GM12878 (cell line): ENCODE measurements at regions of chr1 and their contacts with region 1.

Region 1: DNA sequence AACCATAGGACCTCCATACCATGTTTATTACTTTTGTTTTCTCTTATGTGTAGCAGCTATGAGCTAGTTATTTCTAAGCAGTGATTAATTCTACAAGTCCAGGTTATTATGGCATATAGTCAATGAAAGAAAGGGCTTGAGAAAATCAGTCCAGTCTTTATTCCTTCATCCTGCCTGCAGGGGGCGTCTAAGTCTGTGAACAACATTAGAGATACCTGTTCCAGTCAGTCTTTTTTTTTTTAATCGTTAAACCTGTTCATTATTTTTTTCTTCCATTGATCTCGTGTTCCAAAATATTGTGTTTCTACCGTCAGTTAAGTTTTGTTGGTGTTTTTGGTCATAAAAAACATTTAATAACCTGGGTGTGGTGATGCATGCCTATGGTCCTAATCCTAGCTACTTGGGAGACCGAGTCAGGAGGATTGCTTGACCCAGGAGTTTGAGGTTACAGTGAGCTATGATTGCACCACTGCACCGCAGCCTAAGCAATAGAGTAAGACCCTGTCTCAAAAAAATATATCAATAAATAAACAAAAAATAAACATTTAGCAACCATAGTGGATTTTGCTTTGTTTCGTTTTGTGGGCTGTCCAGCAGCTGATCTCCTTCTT is 29.4 kb upstream of the CD2 start:
- DNase-seq: no peak
- ATAC-seq: peak; percentile 88
- H3K4me3 ChIP-seq: no peak overlapping the region
- H3K27ac ChIP-seq: no peak overlapping the region
- H3K4me1 ChIP-seq: no peaks in the 10 kb centered on the region
- H3K27me3 ChIP-seq: no peaks in the 10 kb centered on the region
- CTCF ChIP-seq: peak; percentile 70 to 78 (median 72)
- EP300 ChIP-seq: no peak
- POLR2A ChIP-seq: no peak
- RAD21 ChIP-seq: peak; percentile 80

Region 2: GRCh38 chr1:116122955-116123757 is 601.7 kb before region 1 on chr1:
- CTCF ChIA-PET with region 1: no interaction called
- POLR2A ChIA-PET with region 1: no interaction called
- RAD21 ChIA-PET with region 1: no interaction called
- SMC1A ChIA-PET with region 1: no interaction called
- in situ Hi-C with region 1: no loop called
- intact Hi-C with region 1: no loop called
- DNase-seq: no peak
- ATAC-seq: no peak
- H3K4me3 ChIP-seq: no peak overlapping the region
- H3K27ac ChIP-seq: no peak overlapping the region
- H3K4me1 ChIP-seq: no peaks in the 10 kb centered on the region
- H3K27me3 ChIP-seq: no peaks in the 10 kb centered on the region
- CTCF ChIP-seq: no peak
- EP300 ChIP-seq: no peak
- POLR2A ChIP-seq: no peak
- RAD21 ChIP-seq: no peak

Region 3: GRCh38 chr1:116763787-116764465 is 39.1 kb after region 1 on chr1:
- CTCF ChIA-PET with region 1: interaction called, 7 read pairs
- POLR2A ChIA-PET with region 1: no interaction called
- RAD21 ChIA-PET with region 1: interaction called, 6 read pairs
- SMC1A ChIA-PET with region 1: interaction called, 10 read pairs
- in situ Hi-C with region 1: no loop called
- intact Hi-C with region 1: no loop called
- DNase-seq: no peak
- ATAC-seq: peak; percentile 22
- H3K4me3 ChIP-seq: no peak overlapping the region
- H3K27ac ChIP-seq: no peak overlapping the region
- H3K4me1 ChIP-seq: peaks cover 10% of the 10 kb centered on the region
- H3K27me3 ChIP-seq: no peaks in the 10 kb centered on the region; a peak in 1 of 4 replicates
- CTCF ChIP-seq: peak; percentile 25 to 41 (median 36); a peak in 5 of 6 replicates
- EP300 ChIP-seq: no peak
- POLR2A ChIP-seq: no peak
- RAD21 ChIP-seq: peak; percentile 44

Region 4: GRCh38 chr1:116785006-116785405 is 60.1 kb after region 1 on chr1:
- CTCF ChIA-PET with region 1: no interaction called
- POLR2A ChIA-PET with region 1: no interaction called
- RAD21 ChIA-PET with region 1: no interaction called
- SMC1A ChIA-PET with region 1: no interaction called
- in situ Hi-C with region 1: no loop called
- intact Hi-C with region 1: no loop called
- DNase-seq: no peak
- ATAC-seq: peak; percentile 70
- H3K4me3 ChIP-seq: no peak overlapping the region
- H3K27ac ChIP-seq: no peak overlapping the region
- H3K4me1 ChIP-seq: no peaks in the 10 kb centered on the region
- H3K27me3 ChIP-seq: no peaks in the 10 kb centered on the region
- CTCF ChIP-seq: no peak
- EP300 ChIP-seq: no peak
- POLR2A ChIP-seq: no peak
- RAD21 ChIP-seq: no peak

Region 5: GRCh38 chr1:116934586-116935207 is 209.8 kb after region 1 on chr1:
- CTCF ChIA-PET with region 1: interaction called, 12 read pairs
- POLR2A ChIA-PET with region 1: interaction called, 3 read pairs
- RAD21 ChIA-PET with region 1: interaction called, 4 read pairs
- SMC1A ChIA-PET with region 1: interaction called, 11 read pairs
- in situ Hi-C with region 1: no loop called
- intact Hi-C with region 1: no loop called
- DNase-seq: no peak
- ATAC-seq: peak; percentile 83
- H3K4me3 ChIP-seq: no peak overlapping the region
- H3K27ac ChIP-seq: no peak overlapping the region
- H3K4me1 ChIP-seq: no peaks in the 10 kb centered on the region
- H3K27me3 ChIP-seq: no peaks in the 10 kb centered on the region
- CTCF ChIP-seq: peak; percentile 37 to 54 (median 43); a peak in 5 of 6 replicates
- EP300 ChIP-seq: no peak
- POLR2A ChIP-seq: no peak
- RAD21 ChIP-seq: peak; percentile 39; the same call in 1 of the 2 replicates

Region 6: DNA sequence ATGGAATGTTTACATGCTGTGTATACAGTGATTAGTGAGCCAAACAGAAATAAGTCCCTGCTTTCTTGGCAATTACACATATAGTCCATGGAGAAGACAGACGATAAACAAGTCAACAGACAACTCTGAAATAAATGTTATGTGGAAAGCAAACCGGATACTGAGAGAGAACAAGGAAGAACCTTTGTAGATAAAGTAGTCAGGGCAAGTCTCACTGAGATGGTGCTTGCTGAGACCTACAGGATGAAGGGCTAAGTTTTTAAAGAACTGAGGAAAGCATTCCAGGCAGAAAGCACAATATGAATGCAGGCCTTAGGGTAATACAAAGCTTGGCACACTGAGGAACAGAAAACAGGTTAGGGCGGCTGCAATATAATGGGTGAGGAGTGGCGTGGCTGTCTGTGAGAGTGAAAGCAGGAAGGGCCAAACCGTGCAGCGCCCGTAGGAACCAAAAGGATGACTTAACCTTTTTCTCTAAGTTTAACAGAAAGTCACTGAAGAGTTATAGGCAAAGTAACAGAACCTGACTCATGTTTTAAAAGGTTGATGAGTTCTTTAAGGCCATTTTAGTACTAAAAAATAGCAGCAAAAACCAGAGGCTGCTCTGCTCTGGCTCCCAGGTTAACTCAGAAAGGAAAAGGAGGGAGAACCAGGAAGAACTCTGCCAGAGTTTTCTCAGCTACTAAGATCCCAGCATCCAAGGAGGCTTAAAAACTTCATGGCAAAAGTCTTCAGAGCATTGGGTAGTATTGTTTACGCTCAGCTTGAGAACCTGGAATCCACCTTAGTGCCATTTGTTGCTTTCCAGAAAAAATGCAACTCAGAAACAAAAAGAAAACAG is 326.6 kb after region 1 on chr1:
- CTCF ChIA-PET with region 1: interaction called, 134 read pairs
- POLR2A ChIA-PET with region 1: no interaction called
- RAD21 ChIA-PET with region 1: interaction called, 39 read pairs
- SMC1A ChIA-PET with region 1: interaction called, 73 read pairs
- in situ Hi-C with region 1: no loop called
- intact Hi-C with region 1: loop called (anchors 2 kb)
- DNase-seq: peak; percentile 34
- ATAC-seq: peak; percentile 93
- H3K4me3 ChIP-seq: peak overlapping the region; percentile 61; the same call in 1 of the 2 replicates
- H3K27ac ChIP-seq: peak overlapping the region; percentile 89
- H3K4me1 ChIP-seq: peaks cover 13% of the 10 kb centered on the region
- H3K27me3 ChIP-seq: no peaks in the 10 kb centered on the region
- CTCF ChIP-seq: no peak
- EP300 ChIP-seq: no peak; a peak in 1 of 4 replicates
- POLR2A ChIP-seq: peak; percentile 55
- RAD21 ChIP-seq: peak; percentile 2; the same call in 1 of the 2 replicates

Region 7: GRCh38 chr1:117128323-117129079 is 403.6 kb after region 1 on chr1:
- CTCF ChIA-PET with region 1: interaction called, 32 read pairs
- POLR2A ChIA-PET with region 1: no interaction called
- RAD21 ChIA-PET with region 1: interaction called, 4 read pairs
- SMC1A ChIA-PET with region 1: interaction called, 5 read pairs
- in situ Hi-C with region 1: no loop called
- intact Hi-C with region 1: no loop called
- DNase-seq: no peak
- ATAC-seq: peak; percentile 79
- H3K4me3 ChIP-seq: no peak overlapping the region
- H3K27ac ChIP-seq: no peak overlapping the region
- H3K4me1 ChIP-seq: no peaks in the 10 kb centered on the region
- H3K27me3 ChIP-seq: peaks cover 0 to 3% of the 10 kb centered on the region in 2 experiments; a peak in 2 of 4 replicates
- CTCF ChIP-seq: peak in 2 of 3 experiments; percentile 47 to 52; a peak in 3 of 6 replicates
- EP300 ChIP-seq: no peak
- POLR2A ChIP-seq: no peak
- RAD21 ChIP-seq: peak; percentile 66